Cardiac septum (tissue), 1 donor: ENCODE measurements at regions of chr19 and their contacts with region 1.

Region 1: GRCh38 chr19:49812997-49813861 is at the start of gene FUZ:
- DNase-seq: peak; percentile 98
- total RNA-seq, gene FUZ: 13.7 TPM

Region 2: GRCh38 chr19:49614096-49614833 is 199.0 kb before region 1 on chr19:
- intact Hi-C with region 1: no loop called
- DNase-seq: no peak

Region 3: GRCh38 chr19:49676690-49677231 is 136.5 kb before region 1 on chr19:
- intact Hi-C with region 1: loop called (anchors 5 kb)
- DNase-seq: peak; percentile 100

Region 4: DNA sequence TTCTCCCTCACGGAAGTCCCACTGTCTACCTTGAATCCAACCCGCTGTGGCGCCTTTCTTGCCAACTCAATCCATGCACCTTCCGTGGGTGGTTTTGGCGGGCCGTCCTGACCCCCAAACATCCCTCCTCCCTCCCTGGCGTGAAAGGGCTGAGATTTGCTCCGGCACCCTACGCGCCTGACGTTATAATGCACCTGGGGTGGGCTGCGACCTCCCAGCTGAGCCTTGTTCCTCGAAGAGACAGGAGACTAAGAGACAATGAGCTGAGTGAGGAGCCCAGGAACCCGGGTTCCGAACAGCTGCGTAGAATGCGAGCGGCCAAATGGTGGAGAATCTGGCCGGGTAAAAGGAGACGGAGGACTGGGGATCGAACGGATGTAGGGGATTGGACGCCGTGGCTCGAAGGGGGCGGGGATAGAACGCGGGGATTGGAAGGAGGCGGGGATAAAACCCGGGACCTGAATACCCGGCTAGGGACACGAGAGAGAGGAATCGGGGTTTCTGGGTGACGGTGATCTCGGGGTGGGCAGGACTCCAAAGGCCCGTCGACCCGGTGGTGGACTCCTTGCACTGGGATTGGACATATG is 122.5 kb before region 1 on chr19 and contains the start of gene CPT1C:
- intact Hi-C with region 1: no loop called
- DNase-seq: peak; percentile 86
- total RNA-seq, gene CPT1C: 3.1 TPM

Region 5: GRCh38 chr19:49766007-49766937 is 47.0 kb before region 1 on chr19:
- intact Hi-C with region 1: loop called (anchors 5 kb)
- DNase-seq: peak; percentile 100

Region 6: DNA sequence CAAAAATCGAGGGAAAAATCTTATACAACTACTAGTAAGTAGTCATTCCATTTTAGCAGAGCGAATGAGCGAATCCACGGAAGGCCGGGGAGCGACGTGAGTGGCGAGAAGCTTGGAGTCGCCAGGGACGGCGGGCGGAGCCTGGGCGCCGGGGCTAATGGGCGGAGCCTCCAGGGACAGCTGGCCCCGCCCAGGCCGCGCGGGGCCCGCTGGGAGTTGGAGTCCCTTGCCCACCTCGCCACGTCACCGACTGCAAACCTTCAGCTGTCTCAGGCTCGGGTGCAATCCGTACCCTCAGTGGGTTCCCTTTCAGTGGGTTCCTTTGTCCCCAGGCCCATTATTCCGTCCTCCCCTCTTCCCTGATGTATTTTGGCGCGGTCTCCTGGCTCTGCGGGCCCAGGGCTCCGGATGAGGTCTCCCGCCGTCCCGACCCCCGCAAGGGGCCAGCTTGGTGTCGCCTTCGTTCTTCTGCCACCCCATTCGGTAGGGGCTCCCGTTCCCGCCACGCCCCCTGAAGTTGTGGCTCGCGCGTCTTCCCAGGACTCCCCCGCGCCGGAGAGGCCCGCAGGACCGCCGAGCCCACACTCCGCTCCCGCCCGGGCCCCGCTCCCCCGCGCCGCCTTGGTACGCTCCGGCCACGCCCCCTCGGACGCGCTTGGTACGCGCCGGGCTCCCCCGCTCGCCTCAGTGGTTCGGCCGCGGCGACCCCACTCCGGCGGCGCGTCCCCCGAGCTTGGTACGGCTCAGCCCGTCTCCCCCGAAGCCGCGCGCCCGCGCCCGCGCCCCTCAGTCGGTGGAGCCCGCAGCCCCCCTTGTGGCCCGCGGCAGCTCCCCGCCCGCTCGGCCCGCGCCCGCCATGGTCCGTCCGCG is 37.5 kb after region 1 on chr19 and contains the start of gene PTOV1:
- intact Hi-C with region 1: loop called (anchors 2 kb)
- DNase-seq: peak; percentile 97
- total RNA-seq, gene PTOV1: 95.8 TPM

Region 7: DNA sequence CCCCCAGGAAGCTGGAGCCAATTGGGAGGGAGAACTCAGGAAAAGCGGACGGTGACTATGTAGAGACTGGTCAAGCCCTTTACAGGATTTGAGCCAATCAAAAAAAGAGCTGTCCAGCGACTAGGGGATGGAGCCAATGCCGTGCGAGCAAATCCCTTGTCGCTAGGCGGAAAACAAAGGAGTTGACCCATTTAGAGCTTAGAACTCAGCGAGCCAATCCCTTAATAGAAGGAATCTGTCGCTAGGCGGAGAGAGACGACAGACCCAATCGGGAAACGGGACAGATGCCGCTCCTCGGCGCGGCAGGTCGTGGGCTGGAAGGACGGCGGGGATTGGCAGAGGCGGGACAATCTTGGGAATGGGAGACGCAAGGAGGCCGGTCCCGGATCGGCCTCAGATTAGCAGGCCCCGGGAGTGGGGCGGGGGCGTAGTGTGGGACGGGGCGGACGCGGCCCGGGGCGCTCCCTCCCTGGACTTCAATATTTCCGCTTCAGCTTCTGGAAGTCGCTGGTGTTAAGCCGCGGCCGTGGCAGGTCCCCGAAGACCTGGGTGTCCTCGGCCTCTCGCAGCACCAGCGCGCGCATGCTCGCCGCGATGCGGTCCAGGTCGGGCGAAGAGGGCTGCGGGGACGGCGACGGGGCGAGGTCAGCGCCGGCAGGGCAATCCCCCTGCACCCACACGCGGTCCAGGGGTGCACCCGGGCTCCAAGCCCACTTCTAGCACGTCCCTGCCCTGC is 56.4 kb after region 1 on chr19:
- intact Hi-C with region 1: loop called (anchors 5 kb)
- DNase-seq: peak; percentile 98

Region 8: GRCh38 chr19:49968279-49968922 is 155.2 kb after region 1 on chr19:
- intact Hi-C with region 1: no loop called
- DNase-seq: no peak